Tibial artery (tissue), 4 donors: ENCODE measurements at regions of chr1 and their contacts with region 1.

Region 1: GRCh38 chr1:164595212-164595611 is 36.2 kb downstream of the PBX1 start:
- DNase-seq: no peak
- H3K4me3 ChIP-seq: no peak overlapping the region
- H3K27ac ChIP-seq: no peak overlapping the region
- H3K4me1 ChIP-seq: peaks cover 0 to 50% (median 29%) of the 10 kb centered on the region in 4 donors
- H3K27me3 ChIP-seq: no peaks in the 10 kb centered on the region
- CTCF ChIP-seq: no peak

Region 2: DNA sequence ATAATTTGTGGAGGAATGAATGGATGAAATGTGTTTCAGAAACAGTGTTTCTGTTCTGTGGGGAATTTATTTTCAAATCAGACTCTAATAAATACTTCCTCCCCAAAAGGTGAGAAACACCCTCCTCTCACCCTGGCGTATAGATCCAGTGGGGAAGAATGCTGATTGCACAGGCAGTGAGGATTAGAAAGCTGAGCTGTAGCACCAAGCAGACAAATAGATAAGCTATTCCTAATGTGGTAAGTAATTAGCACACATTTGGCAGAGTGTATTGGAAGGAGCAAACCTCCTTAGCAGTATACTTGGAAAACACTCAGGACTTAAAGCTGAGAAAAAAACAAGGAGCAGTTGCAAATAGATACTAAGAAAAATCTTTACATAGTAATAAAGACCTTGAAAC is 1222.6 kb before region 1 on chr1:
- intact Hi-C with region 1: no loop called
- DNase-seq: no peak
- H3K4me3 ChIP-seq: no peak overlapping the region
- H3K27ac ChIP-seq: no peak overlapping the region
- H3K4me1 ChIP-seq: no peaks in the 10 kb centered on the region
- H3K27me3 ChIP-seq: no peaks in the 10 kb centered on the region
- CTCF ChIP-seq: no peak

Region 3: DNA sequence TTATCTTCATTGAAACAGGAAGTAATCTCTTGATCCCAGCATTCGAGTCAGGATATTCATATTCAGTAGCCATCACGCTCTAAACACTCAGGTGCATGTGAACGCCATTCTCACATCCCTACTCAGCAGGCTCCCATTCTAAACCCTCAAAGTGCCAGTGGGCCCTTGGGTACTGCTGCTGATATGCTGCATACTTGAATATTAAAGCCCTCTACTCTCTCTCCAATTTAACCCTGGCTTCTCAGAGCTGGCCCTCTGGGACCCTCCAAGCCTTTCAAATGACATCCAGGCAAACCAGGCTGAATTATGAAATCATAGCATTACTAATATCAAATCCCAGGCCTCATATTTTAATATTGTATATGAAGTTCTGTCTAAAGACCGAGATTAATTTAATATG is 805.3 kb before region 1 on chr1:
- intact Hi-C with region 1: no loop called
- DNase-seq: no peak
- H3K4me3 ChIP-seq: no peak overlapping the region
- H3K27ac ChIP-seq: no peak overlapping the region
- H3K4me1 ChIP-seq: no peaks in the 10 kb centered on the region
- H3K27me3 ChIP-seq: no peaks in the 10 kb centered on the region
- CTCF ChIP-seq: no peak

Region 4: GRCh38 chr1:164510435-164510834 is 84.8 kb before region 1 on chr1:
- intact Hi-C with region 1: no loop called
- DNase-seq: no peak
- H3K4me3 ChIP-seq: no peak overlapping the region
- H3K27ac ChIP-seq: no peak overlapping the region
- H3K4me1 ChIP-seq: peaks cover 0 to 6% (median 0%) of the 10 kb centered on the region in 4 donors
- H3K27me3 ChIP-seq: no peaks in the 10 kb centered on the region
- CTCF ChIP-seq: peak in 1 of 2 experiments; percentile 6

Region 5: GRCh38 chr1:164558461-164559341 is 36.5 kb before region 1 on chr1 and contains the start of gene PBX1:
- intact Hi-C with region 1: loop called (anchors 2 kb)
- DNase-seq: peak; percentile 99
- H3K4me3 ChIP-seq: peak within 1 kb of the TSS; percentile 62 to 89
- H3K27ac ChIP-seq: peak within 1 kb of the TSS; percentile 80 to 88
- H3K4me1 ChIP-seq: peaks cover 0 to 8% (median 0%) of the 10 kb centered on the region in 4 donors
- H3K27me3 ChIP-seq: no peaks in the 10 kb centered on the region
- CTCF ChIP-seq: no peak